HEK293T (cell line): ENCODE measurements at regions of chr2 and their contacts with region 1.

Region 1: DNA sequence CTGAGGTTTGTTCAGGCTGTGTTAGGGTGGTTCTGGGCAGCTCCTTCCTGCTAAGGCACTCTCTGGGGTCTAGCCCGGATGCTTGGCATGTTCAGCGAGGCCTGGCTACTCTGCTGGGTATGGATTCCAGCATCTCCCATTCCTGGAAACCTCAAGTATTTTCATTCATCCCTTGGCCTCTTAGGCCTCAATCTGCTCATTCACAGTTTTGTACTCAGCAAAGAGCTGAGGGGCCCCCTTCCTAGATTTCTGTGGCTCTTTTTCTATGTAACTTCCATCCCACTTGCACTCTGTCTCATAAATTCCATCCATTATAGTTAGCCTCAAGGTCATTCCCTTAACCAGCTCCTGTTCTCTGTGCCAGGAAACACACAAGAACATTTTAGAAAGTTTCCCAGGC is 798.8 kb upstream of the HS6ST1 start:
- DNase-seq: no peak

Region 2: DNA sequence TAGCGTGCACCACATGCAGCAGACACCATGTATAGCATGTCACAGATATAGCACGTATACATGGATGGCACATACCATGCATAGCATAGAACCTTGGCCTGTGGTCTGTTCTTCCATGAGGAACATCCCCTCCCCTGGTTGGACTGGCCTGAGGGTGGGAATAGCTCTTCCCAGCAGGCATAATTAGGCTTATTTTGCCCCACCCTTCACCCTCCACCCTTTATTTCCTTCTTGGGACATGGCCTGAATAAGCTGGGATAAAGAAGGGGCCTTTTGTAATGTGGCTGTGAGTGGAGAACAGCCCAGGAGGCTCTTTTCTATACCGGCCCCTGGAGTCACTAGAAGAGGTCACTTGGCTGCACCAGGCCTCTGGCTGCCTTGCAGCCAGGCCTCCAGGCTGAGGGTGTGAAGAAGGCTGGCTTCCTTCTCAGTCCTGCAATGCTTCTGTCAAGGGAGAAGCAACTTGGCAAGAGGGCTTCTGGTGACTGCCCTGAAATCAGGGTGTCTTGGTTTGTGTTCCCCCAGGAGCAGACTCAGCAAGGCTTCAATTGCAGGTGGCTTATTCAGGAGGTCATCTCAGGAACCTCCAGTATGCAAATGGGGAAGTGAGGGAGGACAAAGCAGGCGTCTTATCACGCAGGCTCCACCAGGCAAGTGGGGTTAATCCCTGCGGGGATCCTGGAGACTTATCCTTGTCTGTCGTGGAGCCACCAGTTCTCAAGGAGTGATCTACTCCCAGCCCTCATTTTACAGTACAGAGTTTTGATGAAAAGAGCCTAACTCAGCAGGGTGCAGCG is 867.0 kb before region 1 on chr2:
- CTCF ChIA-PET with region 1: interaction called, 12 read pairs
- POLR2A ChIA-PET with region 1: no interaction called
- DNase-seq: no peak

Region 3: DNA sequence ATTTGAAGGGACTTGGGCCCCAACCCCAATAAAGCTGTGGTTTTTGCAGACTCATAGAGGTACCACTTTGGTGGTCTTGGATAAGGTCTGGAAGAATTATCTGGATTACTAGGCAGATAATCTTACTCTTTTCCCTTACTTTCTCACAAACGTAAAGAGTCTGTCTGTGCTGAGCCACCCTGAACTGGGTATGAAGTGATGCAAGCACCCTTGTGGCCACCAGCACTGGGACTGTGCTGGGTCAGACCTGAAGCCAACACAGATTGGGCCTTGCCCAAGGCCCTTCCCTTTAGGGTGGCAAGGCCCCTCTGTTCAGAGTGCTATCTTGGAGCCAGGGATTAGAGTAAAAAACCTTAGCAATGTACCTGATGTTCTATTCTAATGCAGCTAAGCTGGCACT is 35.1 kb after region 1 on chr2:
- CTCF ChIA-PET with region 1: no interaction called
- POLR2A ChIA-PET with region 1: no interaction called
- DNase-seq: no peak